Heart left ventricle (tissue), 16 donors: ENCODE measurements at regions of chr6 and their contacts with region 1.

Region 1: DNA sequence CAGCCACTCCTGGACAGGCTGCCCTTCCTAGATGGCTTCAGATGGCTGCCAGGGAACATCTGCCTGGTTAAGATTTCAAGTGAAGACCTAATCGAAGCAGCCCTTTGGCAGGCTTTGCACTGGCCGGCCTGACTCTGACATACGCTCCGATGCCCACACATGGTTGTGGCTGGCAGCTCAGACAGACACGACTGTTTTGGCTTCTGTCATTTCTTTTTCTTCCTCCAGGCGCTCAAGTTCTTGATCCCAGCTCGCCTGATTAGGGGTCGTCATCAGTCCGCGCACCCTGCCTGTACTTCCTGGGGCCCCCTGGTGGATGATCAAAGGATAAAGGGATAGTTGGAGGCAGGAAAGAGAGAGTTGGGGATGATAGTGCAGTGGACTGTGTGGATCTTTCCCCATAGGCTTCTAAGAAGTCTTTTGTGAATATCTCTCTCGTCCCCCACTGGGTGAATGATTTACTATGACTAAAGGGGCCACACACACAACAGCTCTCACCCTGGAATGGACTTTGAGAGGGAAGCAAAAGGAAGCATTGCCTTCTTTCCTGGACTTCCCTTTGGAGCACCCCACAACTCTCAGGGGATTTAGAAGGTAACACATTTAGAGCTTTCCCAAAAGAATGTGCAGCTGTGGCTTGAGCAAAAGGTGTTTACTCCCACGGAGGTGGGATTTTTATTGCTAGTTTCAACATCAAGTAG is 21.4 kb upstream of the TRAM2 start:
- DNase-seq: peak; percentile 61 to 70 (median 67)
- ATAC-seq: peak; percentile 57 to 79 (median 68)
- H3K4me3 ChIP-seq: peak overlapping the region in 6 of 12 donors; percentile 20 to 50 (median 35)
- H3K27ac ChIP-seq: peak overlapping the region in 6 of 12 donors; percentile 8 to 56 (median 36)
- H3K4me1 ChIP-seq: peaks cover 0 to 51% (median 18%) of the 10 kb centered on the region in 12 donors
- H3K27me3 ChIP-seq: no peaks in the 10 kb centered on the region
- CTCF ChIP-seq: peak; percentile 44 to 77 (median 67)
- POLR2A ChIP-seq: no peak

Region 2: GRCh38 chr6:52284460-52285176 is 313.7 kb before region 1 on chr6 and contains the start of gene MCM3:
- intact Hi-C with region 1: loop called in 1 of 10 experiments (anchors 10 kb)
- DNase-seq: peak; percentile 96 to 98 (median 98)
- ATAC-seq: peak; percentile 100
- H3K4me3 ChIP-seq: peak within 1 kb of the TSS; percentile 57 to 99 (median 80)
- H3K27ac ChIP-seq: peak within 1 kb of the TSS in 11 of 12 donors; percentile 32 to 79 (median 67)
- H3K4me1 ChIP-seq: peaks cover 0 to 32% (median 12%) of the 10 kb centered on the region in 12 donors
- H3K27me3 ChIP-seq: no peaks in the 10 kb centered on the region
- CTCF ChIP-seq: peak in 5 of 12 donors; percentile 2 to 43 (median 19)
- POLR2A ChIP-seq: peak in 1 of 2 donors; percentile 50
- total RNA-seq, gene MCM3: 18.5 to 36.5 (median 25.0) TPM

Region 3: GRCh38 chr6:52503848-52504781 is 94.2 kb before region 1 on chr6:
- intact Hi-C with region 1: loop called in 1 of 10 experiments (anchors 5 kb)
- DNase-seq: peak; percentile 89 to 94 (median 92)
- ATAC-seq: peak; percentile 84 to 90 (median 86)
- H3K4me3 ChIP-seq: no peak overlapping the region
- H3K27ac ChIP-seq: peak overlapping the region; percentile 50 to 88 (median 78)
- H3K4me1 ChIP-seq: peaks cover 11 to 75% (median 47%) of the 10 kb centered on the region in 12 donors
- H3K27me3 ChIP-seq: no peaks in the 10 kb centered on the region
- CTCF ChIP-seq: no peak
- POLR2A ChIP-seq: no peak

Region 4: GRCh38 chr6:52529311-52529710 is 69.0 kb before region 1 on chr6:
- intact Hi-C with region 1: no loop called
- DNase-seq: no peak
- ATAC-seq: no peak
- H3K4me3 ChIP-seq: no peak overlapping the region
- H3K27ac ChIP-seq: no peak overlapping the region
- H3K4me1 ChIP-seq: peaks cover 0 to 8% (median 0%) of the 10 kb centered on the region in 12 donors
- H3K27me3 ChIP-seq: no peaks in the 10 kb centered on the region
- CTCF ChIP-seq: no peak
- POLR2A ChIP-seq: no peak

Region 5: DNA sequence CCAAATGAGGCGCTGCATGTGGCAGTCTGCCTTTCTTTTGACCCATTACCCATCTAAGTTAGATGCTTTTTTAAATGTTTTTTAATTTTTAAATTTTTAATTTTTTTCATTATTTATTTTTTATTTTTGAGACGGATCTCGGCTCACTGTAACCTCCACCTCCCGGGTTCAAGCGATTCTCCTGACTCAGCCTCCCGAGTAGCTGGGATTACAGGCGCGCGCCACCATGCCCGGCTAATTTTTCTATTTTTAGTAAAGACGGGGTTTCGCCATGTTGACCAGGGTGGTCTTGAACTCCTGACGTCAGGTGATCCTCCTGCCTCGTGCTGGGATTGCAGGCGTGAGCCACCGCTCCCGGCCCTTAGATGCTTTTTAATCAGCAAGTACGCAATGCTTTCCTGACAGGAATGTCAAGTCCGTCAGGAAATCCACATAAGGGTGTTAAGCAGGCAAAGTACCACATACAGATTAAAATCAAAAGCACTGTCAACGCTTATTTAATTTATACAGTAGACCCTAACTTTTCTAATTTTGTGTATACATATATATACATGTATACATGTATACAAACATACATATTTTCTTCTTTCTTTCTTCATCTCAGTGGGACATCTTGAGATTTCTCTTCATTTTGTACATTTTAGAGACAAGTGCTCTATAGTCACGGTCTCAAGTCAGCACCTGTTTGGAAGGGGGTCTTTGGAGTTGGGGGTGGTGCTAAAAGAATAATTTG is 397.8 kb after region 1 on chr6:
- intact Hi-C with region 1: loop called in 1 of 10 experiments (anchors 10 kb)
- DNase-seq: peak in 4 of 5 donors; percentile 44 to 51 (median 45)
- ATAC-seq: peak in 2 of 4 donors; percentile 4 to 7
- H3K4me3 ChIP-seq: peak overlapping the region in 10 of 12 donors; percentile 26 to 80 (median 58)
- H3K27ac ChIP-seq: peak overlapping the region in 11 of 12 donors; percentile 58 to 98 (median 91)
- H3K4me1 ChIP-seq: peaks cover 0 to 25% (median 15%) of the 10 kb centered on the region in 12 donors
- H3K27me3 ChIP-seq: no peaks in the 10 kb centered on the region
- CTCF ChIP-seq: no peak
- POLR2A ChIP-seq: no peak